ENCODE measurements at regions of chr1 and their contacts with region 1.

Region 1: GRCh38 chr1:155172732-155173477 is at the start of gene KRTCAP2:
- DNase-seq: peak; percentile 91
- H3K4me3 ChIP-seq: peak within 1 kb of the TSS; percentile 77 to 97 (median 96)
- H3K27ac ChIP-seq: peak within 1 kb of the TSS; percentile 63
- H3K4me1 ChIP-seq: peaks cover 15% of the 10 kb centered on the region
- H3K27me3 ChIP-seq: no peaks in the 10 kb centered on the region
- CTCF ChIP-seq: peak; percentile 90 to 97
- total RNA-seq, gene KRTCAP2: 62.7 to 177 TPM

Region 2: GRCh38 chr1:154589780-154590179 is 583.1 kb before region 1 on chr1:
- CTCF ChIA-PET with region 1: no interaction called
- dilution Hi-C with region 1: no loop called
- in situ Hi-C with region 1: no loop called
- intact Hi-C with region 1: no loop called
- DNase-seq: no peak
- H3K4me3 ChIP-seq: no peak overlapping the region
- H3K27ac ChIP-seq: no peak overlapping the region
- H3K4me1 ChIP-seq: no peaks in the 10 kb centered on the region
- H3K27me3 ChIP-seq: no peaks in the 10 kb centered on the region
- CTCF ChIP-seq: no peak

Region 3: GRCh38 chr1:155127105-155127964 is 45.6 kb before region 1 on chr1 and contains the start of gene EFNA1:
- CTCF ChIA-PET with region 1: interaction called, 10 read pairs
- dilution Hi-C with region 1: no loop called
- in situ Hi-C with region 1: no loop called
- intact Hi-C with region 1: no loop called
- DNase-seq: peak; percentile 92
- H3K4me3 ChIP-seq: peak within 1 kb of the TSS; percentile 66 to 89 (median 76)
- H3K27ac ChIP-seq: peak within 1 kb of the TSS; percentile 92
- H3K4me1 ChIP-seq: peaks cover 65% of the 10 kb centered on the region
- H3K27me3 ChIP-seq: no peaks in the 10 kb centered on the region
- CTCF ChIP-seq: no peak
- total RNA-seq, gene EFNA1: 21.5 to 54.0 TPM

Region 4: DNA sequence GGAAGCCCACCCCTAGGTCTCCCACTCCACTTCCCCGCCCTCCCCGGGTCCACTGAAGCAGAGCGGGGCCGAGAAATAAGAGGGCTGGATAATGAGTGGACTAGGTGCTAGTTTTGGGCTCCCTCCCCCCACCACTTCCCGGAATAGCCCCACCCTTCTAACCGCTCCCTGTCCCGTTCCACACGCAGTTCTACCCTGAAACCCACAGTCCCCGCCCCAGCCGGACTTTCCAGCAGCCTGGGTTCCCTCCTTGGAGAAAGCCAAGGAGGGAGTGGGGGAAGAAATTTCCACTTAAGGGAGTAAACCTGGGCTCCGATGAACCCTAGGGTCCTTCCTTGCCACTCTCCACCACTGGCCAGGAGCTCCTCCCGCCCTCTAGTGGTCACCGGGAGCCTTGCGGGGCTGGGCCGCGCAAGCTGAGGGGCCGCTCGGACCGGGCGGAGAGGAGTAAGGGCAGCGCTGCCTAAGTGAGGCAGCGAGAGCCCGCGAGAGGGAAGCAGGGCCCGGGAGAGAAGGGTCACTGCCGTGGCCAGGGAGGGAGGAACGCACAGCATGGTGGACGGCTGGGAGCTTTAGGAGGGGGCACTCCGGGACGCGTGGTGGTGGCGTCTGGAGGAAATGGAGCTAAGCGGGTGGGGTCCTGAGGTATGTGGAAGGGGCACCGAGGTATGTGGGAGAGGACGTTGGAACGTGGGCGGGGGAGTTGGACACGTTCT is 20.5 kb after region 1 on chr1:
- CTCF ChIA-PET with region 1: interaction called, 5 read pairs
- dilution Hi-C with region 1: no loop called
- in situ Hi-C with region 1: no loop called
- intact Hi-C with region 1: loop called (anchors 1 kb)
- DNase-seq: peak; percentile 89
- H3K4me3 ChIP-seq: peak overlapping the region; percentile 20 to 52 (median 30)
- H3K27ac ChIP-seq: peak overlapping the region; percentile 66
- H3K4me1 ChIP-seq: peaks cover 25% of the 10 kb centered on the region
- H3K27me3 ChIP-seq: no peaks in the 10 kb centered on the region
- CTCF ChIP-seq: peak; percentile 84 to 97

Region 5: GRCh38 chr1:155227261-155228095 is 54.6 kb after region 1 on chr1:
- CTCF ChIA-PET with region 1: no interaction called
- dilution Hi-C with region 1: no loop called
- in situ Hi-C with region 1: no loop called
- intact Hi-C with region 1: loop called (anchors 1 kb)
- DNase-seq: peak; percentile 98
- H3K4me3 ChIP-seq: peak overlapping the region; percentile 71 to 93 (median 76)
- H3K27ac ChIP-seq: peak overlapping the region; percentile 69
- H3K4me1 ChIP-seq: peaks cover 25% of the 10 kb centered on the region
- H3K27me3 ChIP-seq: no peaks in the 10 kb centered on the region
- CTCF ChIP-seq: no peak

Region 6: DNA sequence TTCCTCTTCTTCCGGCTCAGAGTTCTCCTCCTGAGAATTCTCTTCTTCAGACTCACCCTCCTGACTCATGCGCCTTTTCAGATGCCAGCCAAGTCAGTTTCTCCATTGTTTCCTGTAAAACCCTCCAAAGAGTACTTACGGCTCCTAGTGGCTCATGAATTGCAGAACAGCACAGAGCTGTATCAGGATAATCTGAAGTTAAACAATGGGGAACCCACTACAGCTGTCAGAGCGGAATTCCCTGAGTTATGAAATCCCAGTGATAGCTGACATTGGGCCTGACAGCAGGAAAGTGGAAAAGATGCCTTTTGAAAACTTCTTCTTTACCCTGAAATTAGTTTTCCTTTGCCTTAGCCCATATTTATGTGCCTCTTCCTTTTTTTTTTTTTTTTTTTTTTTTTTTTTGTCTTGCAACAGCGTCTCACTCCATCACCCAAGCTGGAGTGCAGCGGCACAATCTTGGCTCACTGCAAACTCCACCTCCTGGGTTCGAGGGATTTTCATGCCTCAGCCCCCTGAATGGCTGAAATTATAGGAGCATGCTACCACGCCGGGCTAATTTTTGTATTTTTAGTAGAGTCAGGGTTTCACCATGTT is 475.7 kb after region 1 on chr1:
- CTCF ChIA-PET with region 1: no interaction called
- dilution Hi-C with region 1: no loop called
- in situ Hi-C with region 1: no loop called
- intact Hi-C with region 1: loop called (anchors 5 kb)
- DNase-seq: peak; percentile 95
- H3K4me3 ChIP-seq: peak overlapping the region; percentile 39 to 58 (median 46)
- H3K27ac ChIP-seq: peak overlapping the region; percentile 78
- H3K4me1 ChIP-seq: peaks cover 56% of the 10 kb centered on the region
- H3K27me3 ChIP-seq: no peaks in the 10 kb centered on the region
- CTCF ChIP-seq: peak; percentile 73 to 80

Measured in mammary epithelial cell (primary cell).